ENCODE measurements at regions of chr3 and their contacts with region 1.

Region 1: DNA sequence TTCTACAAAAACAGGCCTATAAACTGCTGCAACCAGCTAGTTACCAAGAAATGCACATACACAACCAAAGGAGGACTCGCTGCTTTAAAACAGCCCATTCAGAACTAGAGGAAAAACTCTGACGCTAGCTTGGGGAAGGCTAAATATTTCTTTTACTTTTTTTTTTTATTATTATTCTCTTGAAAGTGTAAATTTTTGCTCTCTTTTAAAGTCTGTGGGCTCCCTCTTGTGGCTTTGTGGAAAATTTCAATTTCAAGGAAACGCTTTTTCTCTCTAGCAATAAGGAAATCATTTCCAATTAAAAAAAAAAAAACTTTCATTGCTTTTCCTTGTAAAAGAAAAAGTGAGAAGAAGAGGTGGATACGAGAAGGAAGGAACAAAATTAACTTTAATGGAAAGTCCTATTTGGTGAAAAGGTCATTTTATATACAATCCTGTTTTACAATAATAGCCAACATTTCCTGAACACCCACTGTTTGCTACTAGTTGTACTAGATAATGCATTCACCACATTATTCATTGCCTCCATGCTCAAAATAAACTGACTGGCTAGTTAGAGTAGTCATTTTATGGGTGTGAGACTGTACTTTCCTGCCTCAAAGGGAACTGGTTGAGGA is 51.2 kb upstream of the SAMMSON start:
- DNase-seq: no peak
- H3K4me3 ChIP-seq: no peak overlapping the region
- H3K27ac ChIP-seq: peak overlapping the region; percentile 24 to 32
- H3K4me1 ChIP-seq: peaks cover 0 to 4% of the 10 kb centered on the region in 2 donors
- H3K27me3 ChIP-seq: no peaks in the 10 kb centered on the region
- CTCF ChIP-seq: peak; percentile 38 to 79 (median 66)

Region 2: DNA sequence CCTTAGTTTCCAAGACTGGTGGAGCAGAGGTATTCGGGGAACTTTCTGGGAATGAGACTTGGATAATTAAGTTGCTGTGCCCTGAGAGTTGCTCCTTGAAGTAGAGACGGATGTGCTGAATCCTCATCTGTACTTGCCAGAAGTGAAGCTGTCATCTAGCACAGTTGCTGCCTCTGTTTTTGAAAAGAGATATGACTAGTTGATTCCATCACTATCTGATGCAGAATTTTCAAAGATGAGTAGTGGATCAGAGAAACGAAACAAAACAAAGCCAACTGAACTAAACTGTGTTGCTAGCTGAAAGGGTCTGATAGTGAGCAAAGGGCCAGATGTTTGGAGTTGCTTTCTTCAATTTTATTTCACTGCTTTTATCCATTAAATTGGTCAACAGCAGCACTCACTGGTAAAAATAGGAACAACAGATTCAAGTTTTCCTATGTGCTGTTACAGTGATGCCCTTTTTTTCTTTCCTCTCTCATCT is 156.4 kb before region 1 on chr3:
- intact Hi-C with region 1: loop called (anchors 5 kb)
- DNase-seq: no peak
- H3K4me3 ChIP-seq: no peak overlapping the region
- H3K27ac ChIP-seq: no peak overlapping the region
- H3K4me1 ChIP-seq: peaks cover 7 to 21% of the 10 kb centered on the region in 2 donors
- H3K27me3 ChIP-seq: no peaks in the 10 kb centered on the region
- CTCF ChIP-seq: peak; percentile 36 to 63 (median 53)

Region 3: DNA sequence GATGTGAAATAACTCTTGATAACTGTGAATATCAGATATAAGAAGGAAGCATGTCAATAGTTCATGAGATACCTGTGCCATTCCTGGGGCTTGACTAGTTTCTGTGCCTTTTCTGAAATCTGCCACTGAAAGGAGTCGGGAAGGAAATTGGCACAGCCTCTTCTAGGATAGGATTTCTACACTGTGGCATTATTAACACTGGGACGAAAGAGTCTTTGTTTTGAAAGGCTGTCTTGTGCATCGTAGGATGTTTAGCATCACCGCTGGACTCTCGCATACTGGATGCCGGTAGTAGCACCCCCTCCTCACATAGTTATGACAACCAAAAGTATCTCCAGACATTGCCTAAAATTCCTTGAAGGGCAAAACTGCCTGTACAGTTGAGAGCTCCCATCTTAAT is 26.7 kb before region 1 on chr3:
- intact Hi-C with region 1: loop called (anchors 2 kb)
- DNase-seq: no peak
- H3K4me3 ChIP-seq: no peak overlapping the region
- H3K27ac ChIP-seq: no peak overlapping the region
- H3K4me1 ChIP-seq: no peaks in the 10 kb centered on the region
- H3K27me3 ChIP-seq: no peaks in the 10 kb centered on the region
- CTCF ChIP-seq: no peak

Region 4: DNA sequence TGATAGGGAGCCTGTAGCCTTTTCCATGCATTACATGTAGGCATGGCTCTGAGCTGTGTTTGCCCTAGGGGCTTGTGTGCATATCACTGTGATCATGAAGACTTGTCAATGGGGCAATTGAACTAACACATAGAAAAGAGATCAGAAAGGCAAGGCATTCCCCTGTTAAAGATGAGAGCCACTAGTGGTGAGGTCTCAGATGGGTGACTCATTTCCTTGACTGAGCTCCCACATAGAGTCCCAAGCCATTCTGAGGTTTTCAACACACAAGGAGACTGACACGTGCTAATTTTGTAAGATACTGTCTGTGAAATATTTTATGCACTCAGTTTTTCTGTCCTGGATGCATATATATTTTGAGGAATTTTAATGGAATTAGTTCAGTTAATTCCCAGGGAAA is 104.9 kb after region 1 on chr3:
- intact Hi-C with region 1: no loop called
- DNase-seq: no peak
- H3K4me3 ChIP-seq: no peak overlapping the region
- H3K27ac ChIP-seq: no peak overlapping the region
- H3K4me1 ChIP-seq: peaks cover 0 to 26% of the 10 kb centered on the region in 2 donors
- H3K27me3 ChIP-seq: no peaks in the 10 kb centered on the region
- CTCF ChIP-seq: no peak